ENCODE measurements at regions of chr2 and their contacts with region 1.

Region 1: DNA sequence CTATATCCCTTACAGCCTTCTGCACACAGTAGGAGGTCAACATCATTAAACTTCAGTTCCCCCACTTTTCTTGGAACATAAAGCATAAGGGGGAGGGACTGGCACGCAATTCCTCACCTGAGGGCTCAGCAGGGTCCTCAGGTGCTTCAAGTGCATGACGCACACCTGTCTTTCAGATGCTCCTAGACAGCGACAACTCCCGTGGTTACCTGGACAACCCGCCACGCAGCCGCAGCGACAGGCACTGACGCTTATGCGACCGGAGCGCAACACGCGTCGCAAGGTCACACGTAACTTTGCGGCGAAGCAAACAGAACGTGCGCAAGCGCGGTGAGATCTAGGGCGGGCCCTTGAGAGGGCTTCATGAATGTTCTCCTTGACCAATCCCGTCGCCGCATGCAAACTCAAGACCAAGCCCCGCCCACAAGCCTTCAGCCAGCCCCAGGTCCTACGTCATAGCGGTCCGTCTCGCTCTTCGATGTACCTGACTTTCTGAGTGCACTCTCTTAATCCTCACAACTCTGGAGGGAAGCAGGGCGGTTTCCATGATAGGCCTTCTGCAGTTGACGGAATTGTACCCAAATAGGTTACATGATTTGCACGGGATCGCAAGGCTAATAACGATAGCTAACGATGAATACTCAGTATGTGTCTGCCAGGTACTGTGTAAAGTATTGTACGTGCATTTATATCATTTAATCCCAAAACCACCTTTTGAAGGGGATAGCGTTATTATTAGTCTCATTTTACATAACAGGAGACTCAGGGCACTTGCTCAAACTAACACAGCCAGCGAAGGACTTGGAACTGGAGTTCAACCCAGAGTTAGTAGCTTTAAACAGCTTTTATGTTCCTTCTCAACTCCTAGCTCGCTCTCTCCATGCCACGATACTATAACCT is at the start of gene IFT172:
- DNase-seq: peak; percentile 100
- ATAC-seq: peak; percentile 97
- H3K4me3 Mint-ChIP-seq: peak within 1 kb of the TSS; percentile 75
- H3K27ac Mint-ChIP-seq: peak within 1 kb of the TSS; percentile 63
- H3K4me1 Mint-ChIP-seq: peaks cover 23% of the 10 kb centered on the region
- H3K27me3 Mint-ChIP-seq: peaks cover 11% of the 10 kb centered on the region
- total RNA-seq, gene IFT172: 8.7 TPM

Region 2: GRCh38 chr2:27322766-27323595 is 166.8 kb before region 1 on chr2 and contains the start of gene MPV17:
- CTCF ChIA-PET with region 1: no interaction called
- POLR2A ChIA-PET with region 1: no interaction called
- intact Hi-C with region 1: loop called in 1 of 2 experiments (anchors 1 kb)
- DNase-seq: peak; percentile 94
- ATAC-seq: peak; percentile 99
- H3K4me3 Mint-ChIP-seq: peak within 1 kb of the TSS; percentile 98
- H3K27ac Mint-ChIP-seq: peak within 1 kb of the TSS; percentile 98
- H3K4me1 Mint-ChIP-seq: peaks cover 17% of the 10 kb centered on the region
- H3K27me3 Mint-ChIP-seq: no peaks in the 10 kb centered on the region
- total RNA-seq, gene MPV17: 93.4 to 103 TPM

Region 3: DNA sequence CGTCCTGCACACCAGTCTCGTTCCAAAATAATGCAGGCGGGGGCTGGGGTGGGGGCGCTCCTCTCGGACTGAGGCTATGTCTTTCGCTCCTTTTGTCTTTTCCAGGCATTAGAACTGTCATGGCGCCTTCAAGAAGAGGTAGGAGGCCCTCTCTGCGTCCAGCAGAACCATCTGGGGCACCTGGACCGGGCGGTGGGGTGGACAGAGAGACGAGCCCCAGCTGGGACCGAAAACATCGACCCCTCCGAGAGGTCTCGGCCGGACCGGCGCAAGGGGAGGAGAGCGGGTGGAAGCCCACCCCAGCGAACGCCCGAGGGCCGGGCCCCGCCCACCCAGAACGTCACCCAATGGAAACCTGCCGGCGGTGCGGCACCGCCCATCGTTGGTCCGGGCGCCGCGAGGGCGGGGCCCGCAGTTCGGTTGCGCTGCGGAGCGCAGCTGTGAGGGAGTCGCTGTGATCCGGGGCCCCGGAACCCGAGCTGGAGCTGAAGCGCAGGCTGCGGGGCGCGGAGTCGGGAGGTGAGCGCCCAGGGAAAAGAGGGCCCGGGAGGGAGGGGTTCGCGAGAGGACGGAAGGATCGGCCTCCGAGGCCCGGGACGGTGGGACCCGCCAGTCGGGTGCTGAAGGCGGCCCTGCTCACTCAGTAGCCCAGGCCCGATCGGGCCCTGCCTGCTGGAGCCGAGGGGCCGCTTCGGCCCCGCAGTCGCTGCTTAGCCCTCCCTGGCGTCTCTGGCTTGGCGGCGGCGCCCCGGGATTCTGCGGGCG is 61.4 kb before region 1 on chr2 and contains the start of gene NRBP1:
- CTCF ChIA-PET with region 1: no interaction called
- POLR2A ChIA-PET with region 1: no interaction called
- intact Hi-C with region 1: loop called in 1 of 2 experiments (anchors 1 kb)
- DNase-seq: peak; percentile 97
- ATAC-seq: peak; percentile 85
- H3K4me3 Mint-ChIP-seq: peak within 1 kb of the TSS; percentile 100
- H3K27ac Mint-ChIP-seq: peak within 1 kb of the TSS; percentile 98
- H3K4me1 Mint-ChIP-seq: peaks cover 37% of the 10 kb centered on the region
- H3K27me3 Mint-ChIP-seq: no peaks in the 10 kb centered on the region
- total RNA-seq, gene NRBP1: 74.3 to 74.4 TPM

Region 4: GRCh38 chr2:27628767-27629709 is 139.3 kb after region 1 on chr2 and contains the starts of genes CCDC121 and GPN1:
- CTCF ChIA-PET with region 1: interaction called, 3 read pairs
- POLR2A ChIA-PET with region 1: no interaction called
- intact Hi-C with region 1: loop called in 1 of 2 experiments (anchors 1 kb)
- DNase-seq: peak; percentile 98
- ATAC-seq: peak; percentile 96
- H3K4me3 Mint-ChIP-seq: no peak within 1 kb of the TSS
- H3K27ac Mint-ChIP-seq: no peak within 1 kb of the TSS
- H3K4me1 Mint-ChIP-seq: peaks cover 37% of the 10 kb centered on the region
- H3K27me3 Mint-ChIP-seq: no peaks in the 10 kb centered on the region
- total RNA-seq, gene CCDC121: 0.11 to 0.44 TPM
- total RNA-seq, gene GPN1: 45.6 to 63.9 TPM

Region 5: DNA sequence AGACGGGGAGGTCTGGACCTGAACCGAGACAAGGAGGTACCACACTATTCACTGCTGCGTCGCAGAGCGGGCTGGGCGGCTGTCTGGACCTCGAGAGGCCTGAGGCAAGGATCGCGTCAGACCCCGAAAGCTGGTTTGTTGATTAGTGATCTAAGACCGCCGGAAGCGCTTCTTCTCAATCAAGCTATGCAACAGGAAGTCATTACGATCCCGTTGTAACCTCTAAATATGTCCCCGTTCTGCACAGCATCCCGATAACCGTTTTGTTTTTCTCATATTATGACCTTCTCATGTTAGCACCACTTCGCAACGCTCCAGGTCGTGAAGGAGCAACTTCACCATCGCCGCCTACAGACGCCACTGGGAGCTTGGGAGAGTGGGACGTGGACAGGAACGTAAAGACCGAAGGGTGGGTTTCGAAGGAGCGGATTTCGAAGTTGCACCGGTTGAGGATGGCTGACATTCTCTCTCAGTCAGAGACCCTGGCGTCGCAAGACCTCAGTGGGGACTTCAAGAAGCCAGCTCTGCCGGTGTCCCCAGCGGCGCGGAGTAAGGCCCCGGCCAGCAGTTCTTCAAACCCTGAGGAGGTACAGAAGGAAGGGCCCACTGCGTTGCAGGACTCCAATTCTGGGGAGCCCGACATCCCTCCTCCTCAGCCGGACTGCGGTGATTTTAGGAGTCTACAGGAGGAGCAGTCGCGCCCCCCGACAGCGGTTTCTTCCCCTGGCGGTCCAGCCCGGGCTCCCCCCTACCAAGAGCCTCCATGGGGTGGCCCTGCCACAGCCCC is 173.9 kb after region 1 on chr2 and contains the starts of genes SLC4A1AP and SUPT7L:
- CTCF ChIA-PET with region 1: interaction called, 4 read pairs
- POLR2A ChIA-PET with region 1: no interaction called
- intact Hi-C with region 1: loop called in 1 of 2 experiments (anchors 1 kb)
- DNase-seq: peak; percentile 80
- ATAC-seq: peak; percentile 81
- H3K4me3 Mint-ChIP-seq: peak within 1 kb of the TSS; percentile 98
- H3K27ac Mint-ChIP-seq: peak within 1 kb of the TSS; percentile 100
- H3K4me1 Mint-ChIP-seq: peaks cover 42% of the 10 kb centered on the region
- H3K27me3 Mint-ChIP-seq: no peaks in the 10 kb centered on the region
- total RNA-seq, gene SLC4A1AP: 23.8 to 25.3 TPM
- total RNA-seq, gene SUPT7L: 23.7 to 26.1 TPM

Region 6: GRCh38 chr2:28164280-28164801 is 674.6 kb after region 1 on chr2:
- CTCF ChIA-PET with region 1: no interaction called
- POLR2A ChIA-PET with region 1: no interaction called
- intact Hi-C with region 1: no loop called
- DNase-seq: no peak
- ATAC-seq: no peak
- H3K4me3 Mint-ChIP-seq: no peak overlapping the region
- H3K27ac Mint-ChIP-seq: no peak overlapping the region
- H3K4me1 Mint-ChIP-seq: no peaks in the 10 kb centered on the region
- H3K27me3 Mint-ChIP-seq: no peaks in the 10 kb centered on the region

Measured in activated CD4-positive, alpha-beta T cell treated with anti-CD3 and anti-CD28 coated beads for 36 hours (primary cell).